CD8-positive, alpha-beta T cell (primary cell): ENCODE measurements at regions of chr1 and their contacts with region 1.

Region 1: DNA sequence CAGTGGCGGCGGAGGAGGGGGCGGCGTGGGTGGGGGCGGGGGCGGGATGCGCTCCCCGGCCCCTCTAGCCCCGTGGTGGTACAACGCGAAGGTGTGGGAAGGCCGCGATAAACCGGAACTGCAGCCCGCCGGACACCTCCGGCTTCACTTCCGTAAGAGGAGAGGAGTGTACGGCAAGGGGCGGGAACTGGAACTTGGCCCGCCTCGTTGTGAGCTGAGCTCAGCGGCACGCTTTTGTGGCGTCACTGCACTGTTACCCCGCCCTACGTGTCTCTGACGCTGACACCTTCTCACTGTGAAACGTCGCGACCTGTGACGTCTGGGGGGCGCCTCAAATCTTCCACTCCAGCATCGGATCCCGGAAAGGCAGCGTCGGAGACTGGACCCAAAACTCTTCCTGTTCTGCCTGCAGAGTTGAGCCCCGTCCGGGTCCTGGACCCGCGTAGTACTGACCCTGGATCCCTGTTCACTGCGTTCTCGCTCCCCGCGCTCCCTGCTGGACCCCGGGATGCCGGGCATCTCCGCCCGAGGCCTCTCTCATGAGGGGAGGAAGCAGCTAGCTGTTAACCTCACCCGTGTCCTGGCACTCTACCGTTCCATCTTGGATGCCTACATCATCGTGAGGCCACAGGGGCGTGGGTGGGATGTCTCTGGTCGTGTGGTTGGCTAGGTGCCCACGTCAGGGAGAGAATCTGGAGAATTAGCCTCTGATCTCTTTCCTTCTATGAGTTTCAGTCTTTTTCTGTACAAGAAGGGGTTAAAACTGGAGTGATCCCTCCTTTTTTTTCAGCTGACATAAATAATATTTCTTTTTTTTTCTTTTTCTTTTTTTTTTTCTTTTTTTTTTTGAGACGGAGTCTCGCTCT is at the start of gene ISG20L2:
- DNase-seq: peak; percentile 83 to 100 (median 91)
- ATAC-seq: peak; percentile 93
- H3K4me3 ChIP-seq: peak within 1 kb of the TSS; percentile 80 to 96
- H3K4me3 Mint-ChIP-seq: no peak within 1 kb of the TSS
- H3K27ac ChIP-seq: peak within 1 kb of the TSS; percentile 88 to 99
- H3K27ac Mint-ChIP-seq: peak within 1 kb of the TSS; percentile 95
- H3K4me1 ChIP-seq: peaks cover 41% of the 10 kb centered on the region
- H3K4me1 Mint-ChIP-seq: peaks cover 24% of the 10 kb centered on the region
- H3K27me3 ChIP-seq: no peaks in the 10 kb centered on the region
- H3K27me3 Mint-ChIP-seq: no peaks in the 10 kb centered on the region
- CTCF ChIP-seq: no peak
- total RNA-seq, gene ISG20L2: 54.5 to 63.5 TPM

Region 2: DNA sequence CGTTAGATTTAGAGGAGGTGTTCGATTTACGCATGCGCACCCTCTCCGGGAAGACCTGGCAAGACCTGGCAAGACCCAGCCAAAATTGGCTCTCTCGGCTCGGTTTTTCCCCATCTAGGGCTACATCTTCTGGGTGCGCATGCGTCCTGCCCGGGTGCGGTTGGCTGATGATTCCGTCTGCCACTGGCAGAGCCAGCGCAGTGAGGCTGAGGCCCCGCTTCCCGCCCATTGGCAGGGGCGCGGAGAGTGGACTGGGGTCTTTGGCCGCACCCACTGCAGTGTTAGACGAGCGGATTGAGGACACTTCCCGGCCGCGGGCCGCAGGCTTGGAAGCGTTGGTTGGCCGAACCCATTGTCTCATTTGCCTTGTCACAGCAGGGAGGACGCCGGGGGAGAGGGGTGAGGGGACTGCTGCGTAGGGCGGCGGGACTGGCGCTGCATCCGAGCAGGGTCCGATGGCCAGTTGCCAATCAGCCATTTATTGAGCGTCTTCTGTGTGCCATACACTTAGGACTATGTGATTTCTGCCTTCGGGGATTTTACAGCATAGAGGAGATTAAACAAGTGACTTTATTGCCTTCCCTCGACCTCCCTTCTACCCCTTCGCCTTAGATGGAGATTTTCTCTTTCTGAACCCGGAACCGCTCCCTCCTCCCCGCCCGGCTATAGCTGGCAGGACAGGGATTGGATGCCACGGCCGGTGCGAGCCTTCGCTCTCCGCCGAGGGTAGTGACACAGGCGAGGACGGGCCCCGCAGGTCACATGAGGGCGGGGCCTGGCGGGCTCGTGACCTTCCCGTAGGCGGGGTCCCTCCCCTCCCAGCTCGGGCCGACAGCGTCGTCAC is 272.0 kb before region 1 on chr1:
- CTCF ChIA-PET with region 1: interaction called, 3 read pairs
- POLR2A ChIA-PET with region 1: no interaction called
- intact Hi-C with region 1: loop called in 1 of 2 experiments (anchors 1 kb)
- DNase-seq: peak; percentile 92 to 99 (median 96)
- ATAC-seq: peak; percentile 84
- H3K4me3 ChIP-seq: peak overlapping the region; percentile 57 to 62
- H3K4me3 Mint-ChIP-seq: peak overlapping the region; percentile 93
- H3K27ac ChIP-seq: peak overlapping the region; percentile 83 to 89
- H3K27ac Mint-ChIP-seq: peak overlapping the region; percentile 100
- H3K4me1 ChIP-seq: peaks cover 4% of the 10 kb centered on the region
- H3K4me1 Mint-ChIP-seq: peaks cover 17% of the 10 kb centered on the region
- H3K27me3 ChIP-seq: no peaks in the 10 kb centered on the region
- H3K27me3 Mint-ChIP-seq: no peaks in the 10 kb centered on the region
- CTCF ChIP-seq: no peak

Region 3: DNA sequence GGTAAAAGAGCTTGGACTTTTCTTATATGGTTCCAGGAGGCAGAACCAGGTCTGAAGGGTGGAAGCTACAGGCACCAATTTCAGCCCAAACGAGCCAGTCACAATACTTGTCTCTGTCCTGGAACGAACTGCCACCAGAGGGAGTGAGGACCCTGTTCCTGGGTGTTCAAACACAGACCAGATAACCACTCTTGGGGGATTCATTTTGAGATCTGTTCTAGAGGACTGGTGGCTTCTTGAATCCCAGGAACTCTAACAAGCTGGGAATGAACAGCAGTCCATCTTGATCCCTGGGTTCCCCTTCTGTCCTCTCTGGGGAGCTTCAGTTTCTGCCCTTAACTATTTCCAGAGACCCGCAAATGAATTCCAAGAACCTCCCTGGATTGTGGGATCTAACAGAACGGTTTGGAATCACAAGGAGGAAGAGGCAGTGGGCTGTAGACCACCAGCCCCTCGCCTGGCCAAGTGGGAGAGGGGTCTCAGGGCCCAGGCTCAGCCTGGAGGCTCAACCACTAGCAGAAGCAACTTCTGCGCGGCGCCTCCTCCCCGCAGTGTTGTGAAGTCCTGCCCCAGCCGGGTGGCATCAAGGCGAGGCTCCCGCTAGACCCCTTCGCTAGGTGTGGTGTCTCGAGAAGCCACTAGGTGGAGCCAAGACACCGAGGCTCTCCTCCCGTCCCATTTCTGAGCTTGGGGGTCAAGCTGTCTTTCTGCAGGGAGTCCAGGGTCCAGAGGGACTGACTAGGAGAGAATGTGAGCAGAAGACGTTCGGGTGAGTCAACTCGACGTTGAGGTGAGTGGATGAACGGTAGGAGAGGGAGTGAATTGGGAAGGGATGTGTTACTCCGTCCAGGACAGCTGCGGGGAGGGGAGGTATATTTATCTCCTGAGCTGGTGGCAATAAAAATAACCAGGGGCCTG is 39.5 kb before region 1 on chr1:
- CTCF ChIA-PET with region 1: interaction called, 997 read pairs
- POLR2A ChIA-PET with region 1: interaction called, 19 read pairs
- intact Hi-C with region 1: loop called (anchors 1 kb)
- DNase-seq: peak; percentile 55 to 85 (median 77)
- ATAC-seq: peak; percentile 97
- H3K4me3 ChIP-seq: no peak overlapping the region
- H3K4me3 Mint-ChIP-seq: no peak overlapping the region
- H3K27ac ChIP-seq: no peak overlapping the region
- H3K27ac Mint-ChIP-seq: no peak overlapping the region
- H3K4me1 ChIP-seq: peaks cover 21% of the 10 kb centered on the region
- H3K4me1 Mint-ChIP-seq: peaks cover 25% of the 10 kb centered on the region
- H3K27me3 ChIP-seq: peaks cover 18 to 19% of the 10 kb centered on the region in 2 experiments
- H3K27me3 Mint-ChIP-seq: peaks cover 41% of the 10 kb centered on the region
- CTCF ChIP-seq: peak; percentile 84

Region 4: DNA sequence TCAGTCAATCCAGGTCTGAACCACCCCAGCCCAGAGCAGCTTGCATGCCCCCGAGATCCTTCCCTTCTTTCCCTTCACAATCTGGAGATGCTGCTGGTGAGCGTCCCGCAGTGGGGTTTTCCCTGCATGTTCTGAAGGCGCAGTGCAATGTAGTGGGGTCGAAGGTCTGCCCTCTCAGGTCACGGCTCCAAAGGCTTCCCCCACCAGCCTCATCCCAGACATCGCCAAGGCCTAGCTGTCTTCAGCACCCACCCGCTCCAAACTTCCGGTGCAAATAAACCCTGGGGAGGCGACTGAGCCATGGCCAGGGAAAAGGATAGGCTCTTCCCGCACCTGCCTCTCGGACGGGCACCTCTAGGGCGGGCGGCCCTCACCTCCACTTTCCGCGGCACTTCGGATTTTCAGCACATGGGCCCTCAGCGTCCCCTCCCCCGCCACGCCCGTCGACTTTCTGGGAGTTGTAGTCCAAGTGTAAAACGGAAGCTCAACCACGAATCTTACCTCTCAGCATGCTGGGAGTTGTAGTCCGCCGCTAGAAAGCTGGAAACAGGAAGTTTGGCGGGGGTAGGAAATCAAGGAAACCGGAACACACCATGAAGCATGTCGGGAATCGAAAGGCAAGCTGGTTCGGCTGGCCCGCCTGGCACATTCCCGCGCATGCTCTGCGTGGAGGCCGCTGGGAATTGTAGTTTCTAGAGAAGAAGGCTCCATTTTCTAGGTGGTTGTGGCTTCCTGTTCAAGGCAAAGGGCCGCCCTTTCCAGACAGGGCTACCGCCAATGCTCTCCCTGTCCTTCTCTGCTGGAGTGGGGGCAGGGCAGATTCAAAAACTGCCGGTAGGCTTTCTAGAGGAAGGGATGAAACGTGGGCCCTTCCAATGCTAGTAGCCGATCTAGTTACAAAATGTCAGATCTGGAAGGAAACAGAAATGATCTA is 12.1 kb after region 1 on chr1 and contains the start of gene MRPL24:
- CTCF ChIA-PET with region 1: interaction called, 29 read pairs
- POLR2A ChIA-PET with region 1: interaction called, 44 read pairs
- intact Hi-C with region 1: loop called (anchors 1 kb)
- DNase-seq: peak; percentile 88 to 100 (median 96)
- ATAC-seq: peak; percentile 88
- H3K4me3 ChIP-seq: peak within 1 kb of the TSS; percentile 60 to 68
- H3K4me3 Mint-ChIP-seq: peak within 1 kb of the TSS; percentile 97
- H3K27ac ChIP-seq: peak within 1 kb of the TSS; percentile 55 to 81
- H3K27ac Mint-ChIP-seq: peak within 1 kb of the TSS; percentile 98
- H3K4me1 ChIP-seq: peaks cover 13% of the 10 kb centered on the region
- H3K4me1 Mint-ChIP-seq: peaks cover 38% of the 10 kb centered on the region
- H3K27me3 ChIP-seq: no peaks in the 10 kb centered on the region
- H3K27me3 Mint-ChIP-seq: no peaks in the 10 kb centered on the region
- CTCF ChIP-seq: no peak
- total RNA-seq, gene MRPL24: 9.1 to 12.5 TPM

Region 5: DNA sequence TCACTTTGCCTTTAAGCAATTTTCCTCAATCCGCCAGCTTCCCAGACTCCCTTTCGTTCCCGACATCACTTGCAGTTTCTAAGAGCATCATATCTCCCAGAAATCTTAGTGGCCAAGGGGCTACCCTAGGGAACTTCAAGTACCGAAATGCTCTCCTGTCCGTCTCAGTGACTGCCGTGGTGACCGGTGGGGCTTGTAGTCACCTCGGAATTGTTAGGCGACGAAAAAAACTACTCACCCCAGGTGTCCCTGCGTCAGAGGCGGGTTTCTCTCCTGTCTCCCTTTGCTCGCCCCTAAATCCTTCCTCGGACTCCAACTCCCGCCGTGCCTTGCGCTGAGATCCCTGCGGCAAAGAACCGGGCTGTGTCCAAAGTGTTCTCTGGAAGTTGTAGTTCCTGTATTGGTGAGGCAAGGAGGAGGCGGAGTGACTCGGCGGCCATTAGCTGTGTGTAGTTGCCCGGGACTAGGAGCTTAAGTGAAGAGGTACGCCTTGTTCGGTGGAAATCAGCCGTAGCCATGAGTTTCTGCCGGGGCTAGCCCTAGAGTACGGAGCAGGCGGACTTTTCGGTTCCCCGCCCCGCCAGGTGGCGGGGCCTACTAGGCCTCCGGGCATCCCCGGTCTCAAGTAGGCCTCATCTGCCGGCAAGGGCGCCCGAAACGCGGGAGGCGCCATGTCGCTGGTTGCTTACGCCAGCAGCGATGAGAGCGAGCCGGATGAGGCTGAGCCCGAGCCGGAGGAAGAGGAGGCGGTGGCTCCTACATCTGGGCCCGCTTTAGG is 38.5 kb after region 1 on chr1 and contains the start of gene PRCC:
- CTCF ChIA-PET with region 1: interaction called, 18 read pairs
- POLR2A ChIA-PET with region 1: interaction called, 10 read pairs
- intact Hi-C with region 1: loop called (anchors 1 kb)
- DNase-seq: peak; percentile 93 to 100 (median 97)
- ATAC-seq: peak; percentile 90
- H3K4me3 ChIP-seq: peak within 1 kb of the TSS; percentile 66 to 69
- H3K4me3 Mint-ChIP-seq: no peak within 1 kb of the TSS
- H3K27ac ChIP-seq: peak within 1 kb of the TSS; percentile 87 to 90
- H3K27ac Mint-ChIP-seq: no peak within 1 kb of the TSS
- H3K4me1 ChIP-seq: peaks cover 29% of the 10 kb centered on the region
- H3K4me1 Mint-ChIP-seq: peaks cover 41% of the 10 kb centered on the region
- H3K27me3 ChIP-seq: no peaks in the 10 kb centered on the region
- H3K27me3 Mint-ChIP-seq: no peaks in the 10 kb centered on the region
- CTCF ChIP-seq: no peak
- total RNA-seq, gene PRCC: 55.6 to 58.4 TPM

Region 6: GRCh38 chr1:156813750-156814570 is 85.1 kb after region 1 on chr1:
- CTCF ChIA-PET with region 1: interaction called, 4 read pairs
- POLR2A ChIA-PET with region 1: no interaction called
- intact Hi-C with region 1: loop called in 1 of 2 experiments (anchors 1 kb)
- DNase-seq: peak; percentile 47 to 90 (median 78)
- ATAC-seq: peak; percentile 56
- H3K4me3 ChIP-seq: peak overlapping the region; percentile 75
- H3K4me3 Mint-ChIP-seq: peak overlapping the region; percentile 84
- H3K27ac ChIP-seq: peak overlapping the region; percentile 91 to 99
- H3K27ac Mint-ChIP-seq: peak overlapping the region; percentile 99
- H3K4me1 ChIP-seq: peaks cover 53% of the 10 kb centered on the region
- H3K4me1 Mint-ChIP-seq: peaks cover 69% of the 10 kb centered on the region
- H3K27me3 ChIP-seq: no peaks in the 10 kb centered on the region
- H3K27me3 Mint-ChIP-seq: no peaks in the 10 kb centered on the region
- CTCF ChIP-seq: peak; percentile 68

Region 7: GRCh38 chr1:157138220-157139051 is 409.6 kb after region 1 on chr1 and contains the start of gene ETV3:
- CTCF ChIA-PET with region 1: no interaction called
- POLR2A ChIA-PET with region 1: no interaction called
- intact Hi-C with region 1: loop called in 1 of 2 experiments (anchors 5 kb)
- DNase-seq: peak; percentile 73 to 96 (median 87)
- ATAC-seq: peak; percentile 77
- H3K4me3 ChIP-seq: peak within 1 kb of the TSS; percentile 85 to 93
- H3K4me3 Mint-ChIP-seq: peak within 1 kb of the TSS; percentile 94
- H3K27ac ChIP-seq: peak within 1 kb of the TSS; percentile 84 to 97
- H3K27ac Mint-ChIP-seq: peak within 1 kb of the TSS; percentile 95
- H3K4me1 ChIP-seq: peaks cover 52% of the 10 kb centered on the region
- H3K4me1 Mint-ChIP-seq: peaks cover 54% of the 10 kb centered on the region
- H3K27me3 ChIP-seq: no peaks in the 10 kb centered on the region
- H3K27me3 Mint-ChIP-seq: no peaks in the 10 kb centered on the region
- CTCF ChIP-seq: no peak
- total RNA-seq, gene ETV3: 88.9 to 94.0 TPM